MCF 10A (cell line): ENCODE measurements at regions of chr1 and their contacts with region 1.

Region 1: DNA sequence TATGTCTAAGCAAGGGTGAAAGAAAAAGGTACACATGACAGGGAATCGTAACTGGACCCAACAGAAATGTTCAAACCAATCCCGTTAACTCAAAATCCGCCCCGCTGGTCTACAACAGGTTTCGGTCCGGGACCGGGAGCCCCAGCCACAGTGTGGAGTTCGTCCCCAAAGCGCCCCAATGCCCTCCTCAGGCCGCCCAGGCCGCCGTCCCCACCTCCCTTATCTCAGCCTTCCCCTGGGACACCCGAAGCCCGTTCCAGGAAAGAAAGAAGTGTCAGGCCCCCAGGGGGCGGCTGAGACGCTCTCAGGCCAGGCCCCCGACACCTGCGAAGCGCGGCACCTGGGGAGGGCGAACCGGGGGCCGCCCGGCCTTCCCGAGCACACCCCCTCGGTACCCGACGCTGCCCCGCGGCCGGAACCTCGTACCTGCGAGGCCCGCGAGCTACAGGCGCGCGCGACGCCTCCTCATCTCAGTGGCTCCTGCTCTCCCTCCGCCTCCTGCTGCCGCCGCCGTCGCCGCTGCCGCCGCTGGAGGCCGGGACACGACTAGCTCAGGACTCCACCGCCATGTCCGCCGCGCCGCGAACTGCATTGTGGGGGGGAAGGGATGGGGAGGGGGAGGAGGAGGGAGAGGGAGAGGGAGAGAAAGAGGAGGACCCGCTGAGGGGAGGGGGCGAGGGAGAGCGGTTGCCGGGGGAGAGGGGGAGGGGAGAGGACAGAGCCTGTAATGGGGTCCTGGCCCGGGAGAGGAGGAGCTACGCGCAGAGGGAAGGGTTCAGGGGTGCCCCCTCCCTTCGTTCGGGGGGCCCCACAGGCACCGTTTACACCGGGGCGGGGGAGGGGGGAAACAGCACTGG is at the start of gene TUT4:
- DNase-seq: peak; percentile 79
- H3K4me3 Mint-ChIP-seq: no peak within 1 kb of the TSS
- H3K27ac Mint-ChIP-seq: peak within 1 kb of the TSS; percentile 94
- H3K4me1 Mint-ChIP-seq: peaks cover 45% of the 10 kb centered on the region
- H3K27me3 Mint-ChIP-seq: no peaks in the 10 kb centered on the region
- CTCF ChIP-seq: no peak
- total RNA-seq, gene TUT4: 83.8 and 90.7 TPM in 2 replicates

Region 2: GRCh38 chr1:52404116-52404986 is 148.4 kb before region 1 on chr1 and contains the starts of genes ORC1 and PRPF38A:
- CTCF ChIA-PET with region 1: no interaction called
- POLR2A ChIA-PET with region 1: interaction called, 5 read pairs
- intact Hi-C with region 1: loop called (anchors 5 kb)
- DNase-seq: peak; percentile 98
- H3K4me3 Mint-ChIP-seq: peak within 1 kb of the TSS; percentile 100
- H3K27ac Mint-ChIP-seq: peak within 1 kb of the TSS; percentile 97
- H3K4me1 Mint-ChIP-seq: peaks cover 7% of the 10 kb centered on the region
- H3K27me3 Mint-ChIP-seq: no peaks in the 10 kb centered on the region
- CTCF ChIP-seq: peak; percentile 36
- total RNA-seq, gene ORC1: 1.8 and 2.7 TPM in 2 replicates
- total RNA-seq, gene PRPF38A: 63.8 TPM in 2 replicates

Region 3: GRCh38 chr1:52534928-52535764 is 17.6 kb before region 1 on chr1:
- CTCF ChIA-PET with region 1: interaction called, 9 read pairs
- POLR2A ChIA-PET with region 1: interaction called, 15 read pairs
- intact Hi-C with region 1: no loop called
- DNase-seq: no peak
- H3K4me3 Mint-ChIP-seq: no peak overlapping the region
- H3K27ac Mint-ChIP-seq: no peak overlapping the region
- H3K4me1 Mint-ChIP-seq: peaks cover 8% of the 10 kb centered on the region
- H3K27me3 Mint-ChIP-seq: no peaks in the 10 kb centered on the region
- CTCF ChIP-seq: no peak

Region 4: DNA sequence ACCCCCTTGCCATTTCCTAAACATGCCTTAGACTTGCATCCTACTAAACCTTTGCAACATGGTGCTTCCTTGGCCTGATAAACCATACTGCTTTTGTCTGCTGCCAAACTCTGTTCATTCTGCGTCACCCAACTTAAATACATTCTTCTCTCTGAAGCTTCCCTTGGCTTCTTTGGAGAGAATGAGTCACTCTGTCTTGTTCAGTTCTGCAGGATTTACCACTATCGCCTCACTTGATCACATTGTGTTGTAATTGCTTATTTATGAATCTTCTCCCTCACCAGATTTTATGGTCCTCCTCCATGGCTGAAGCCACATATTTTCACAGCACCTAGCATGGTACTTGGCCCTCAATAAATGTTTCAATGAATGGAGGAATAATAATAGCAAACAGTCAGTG is 21.9 kb after region 1 on chr1:
- CTCF ChIA-PET with region 1: interaction called, 7 read pairs
- POLR2A ChIA-PET with region 1: interaction called, 102 read pairs
- intact Hi-C with region 1: no loop called
- DNase-seq: peak; percentile 94
- H3K4me3 Mint-ChIP-seq: no peak overlapping the region
- H3K27ac Mint-ChIP-seq: peak overlapping the region; percentile 73
- H3K4me1 Mint-ChIP-seq: peaks cover 34% of the 10 kb centered on the region
- H3K27me3 Mint-ChIP-seq: no peaks in the 10 kb centered on the region
- CTCF ChIP-seq: no peak

Region 5: GRCh38 chr1:52662645-52663313 is 110.0 kb after region 1 on chr1:
- CTCF ChIA-PET with region 1: interaction called, 6 read pairs
- POLR2A ChIA-PET with region 1: interaction called, 284 read pairs
- intact Hi-C with region 1: loop called (anchors 2 kb)
- DNase-seq: peak; percentile 98
- H3K4me3 Mint-ChIP-seq: peak overlapping the region; percentile 64
- H3K27ac Mint-ChIP-seq: peak overlapping the region; percentile 68
- H3K4me1 Mint-ChIP-seq: peaks cover 65% of the 10 kb centered on the region
- H3K27me3 Mint-ChIP-seq: no peaks in the 10 kb centered on the region
- CTCF ChIP-seq: no peak